ENCODE measurements at regions of chr19 and their contacts with region 1.

Region 1: DNA sequence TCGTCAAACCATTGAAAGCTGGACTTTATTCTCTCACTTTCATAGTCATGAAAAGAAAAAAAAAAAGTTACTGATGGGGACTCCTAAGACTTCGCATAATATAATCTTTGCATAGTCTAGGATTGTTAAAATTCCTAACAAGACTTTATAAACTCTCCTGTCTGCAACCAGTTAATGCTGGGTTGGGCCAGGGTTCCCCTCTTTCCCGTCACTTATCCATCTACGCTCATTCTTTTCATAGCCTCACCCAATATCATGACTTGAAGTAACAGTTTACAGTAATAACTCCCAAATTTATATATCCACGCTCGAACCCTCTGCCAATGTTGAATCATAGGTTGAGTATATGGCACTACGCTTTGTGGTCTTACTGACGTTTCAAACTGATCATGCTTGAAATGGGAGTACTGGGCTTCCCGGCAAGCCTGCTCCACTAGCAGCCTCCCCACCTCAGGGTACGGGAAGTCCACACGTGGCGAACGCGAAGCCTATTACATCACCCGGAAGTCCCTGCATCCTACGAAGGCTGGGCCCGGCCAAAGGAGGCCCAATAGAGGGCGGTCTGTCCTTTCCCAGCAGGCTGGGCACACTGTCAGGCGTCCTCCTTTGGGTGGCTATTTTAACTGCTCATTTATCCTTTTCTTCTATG is 743 bp upstream of the ZNF460 start:
- DNase-seq: peak; percentile 92 to 95 (median 92)
- ATAC-seq: peak; percentile 96 to 98 (median 97)
- H3K4me3 ChIP-seq: peak overlapping the region; percentile 68 to 99 (median 92)
- H3K27ac ChIP-seq: peak overlapping the region; percentile 94 to 100 (median 99)
- H3K4me1 ChIP-seq: peaks cover 8 to 44% (median 29%) of the 10 kb centered on the region in 12 donors
- H3K27me3 ChIP-seq: no peaks in the 10 kb centered on the region
- CTCF ChIP-seq: peak in 10 of 12 donors; percentile 11 to 66 (median 46)
- POLR2A ChIP-seq: peak in 1 of 2 donors; percentile 54

Region 2: DNA sequence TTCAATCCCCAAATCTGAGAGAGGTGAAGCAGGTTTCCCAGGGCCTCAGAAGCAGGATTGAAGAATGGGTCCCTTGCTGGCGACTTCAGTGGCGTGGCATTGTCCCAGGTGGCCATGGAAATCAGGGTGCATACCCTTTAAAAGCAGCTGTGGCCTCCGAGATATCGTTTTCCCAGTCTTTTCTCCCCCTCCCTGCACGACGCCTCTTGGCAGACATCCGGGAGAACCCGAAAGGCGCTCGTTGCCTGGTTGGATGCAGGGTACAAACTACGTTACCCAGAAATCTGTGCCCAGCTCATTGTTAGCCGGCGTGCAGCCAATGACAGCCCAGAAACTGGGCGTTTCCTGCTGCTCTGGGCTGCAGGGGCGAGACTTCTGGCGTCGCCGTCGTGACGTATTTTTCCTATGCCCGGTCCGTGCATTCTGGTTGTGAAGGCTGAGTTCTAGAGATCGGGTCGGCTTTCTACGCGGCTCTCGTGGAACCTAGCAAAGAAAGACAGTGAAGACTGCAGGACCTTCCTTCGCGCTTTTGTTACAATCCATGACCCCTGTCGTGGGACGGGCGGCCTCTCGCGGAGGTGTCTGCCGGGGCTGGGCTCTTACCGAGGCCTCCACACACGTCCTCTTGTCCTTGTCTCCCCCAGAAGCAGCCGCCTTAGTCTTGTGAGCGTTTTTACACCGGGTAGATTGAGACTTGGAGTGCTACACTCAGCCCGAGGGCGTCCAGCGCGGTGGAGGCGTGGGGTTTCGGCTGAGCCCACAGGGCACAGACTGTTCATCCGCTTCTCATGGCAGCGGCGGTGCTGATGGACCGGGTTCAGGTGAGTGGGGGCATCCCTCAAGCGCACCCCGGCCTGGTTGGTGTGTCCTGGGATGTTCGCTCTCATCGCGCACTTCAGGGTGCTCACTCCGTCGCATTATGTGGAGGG is 71.6 kb after region 1 on chr19 and contains the start of gene ZNF304:
- intact Hi-C with region 1: loop called in 5 of 10 experiments (anchors 1 to 10 kb)
- DNase-seq: peak; percentile 95 to 97 (median 96)
- ATAC-seq: peak; percentile 97 to 99 (median 98)
- H3K4me3 ChIP-seq: peak within 1 kb of the TSS; percentile 75 to 100 (median 92)
- H3K27ac ChIP-seq: peak within 1 kb of the TSS; percentile 41 to 91 (median 86)
- H3K4me1 ChIP-seq: peaks cover 0 to 44% (median 21%) of the 10 kb centered on the region in 12 donors
- H3K27me3 ChIP-seq: no peaks in the 10 kb centered on the region
- CTCF ChIP-seq: no peak
- POLR2A ChIP-seq: peak in 1 of 2 donors; percentile 43
- total RNA-seq, gene ZNF304: 7.0 to 14.5 (median 9.7) TPM

Region 3: DNA sequence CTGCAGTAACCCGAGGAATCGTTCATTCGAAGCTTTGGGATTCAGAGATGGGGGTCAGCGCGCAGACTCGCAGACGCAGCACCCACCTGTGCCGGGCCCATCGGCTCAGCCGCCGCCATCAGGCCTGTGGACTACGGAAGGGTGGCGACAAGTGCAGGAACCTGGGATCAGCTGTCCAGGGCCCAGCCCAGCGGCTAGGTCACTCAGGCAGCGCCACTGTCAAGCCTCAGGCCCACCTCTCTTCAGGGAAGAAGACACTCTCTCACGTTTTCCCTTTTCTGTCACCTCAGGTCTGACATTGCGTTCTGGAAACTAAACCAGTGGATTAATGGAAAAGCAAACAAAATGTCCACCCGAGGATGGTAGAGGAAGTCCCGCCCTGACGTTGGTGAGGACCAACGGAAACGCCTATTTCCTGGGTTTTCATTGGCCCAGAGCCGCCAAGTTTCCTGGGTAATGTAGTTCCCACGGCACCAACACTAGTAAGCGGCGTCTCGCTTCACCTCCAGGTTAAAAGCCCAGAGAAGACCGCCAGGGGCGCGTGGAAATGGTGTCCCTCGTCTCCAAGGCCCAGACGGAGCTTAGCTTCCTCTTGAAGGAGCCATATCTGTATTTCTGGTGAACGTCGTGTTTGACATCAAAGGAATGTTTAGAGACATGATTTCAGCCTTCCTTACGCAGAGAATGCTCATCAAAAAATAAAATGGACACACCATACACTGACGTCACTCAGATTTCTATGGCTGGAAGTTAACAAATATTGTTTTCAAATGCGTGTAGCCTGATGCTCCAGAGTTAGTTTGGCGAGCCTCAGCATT is 197.9 kb after region 1 on chr19 and contains the start of gene ZNF772:
- intact Hi-C with region 1: no loop called
- DNase-seq: peak; percentile 89 to 96 (median 96)
- ATAC-seq: peak; percentile 99 to 100 (median 100)
- H3K4me3 ChIP-seq: peak within 1 kb of the TSS; percentile 45 to 93 (median 70)
- H3K27ac ChIP-seq: peak within 1 kb of the TSS; percentile 73 to 94 (median 85)
- H3K4me1 ChIP-seq: peaks cover 0 to 15% (median 5%) of the 10 kb centered on the region in 12 donors
- H3K27me3 ChIP-seq: no peaks in the 10 kb centered on the region
- CTCF ChIP-seq: peak; percentile 5 to 93 (median 68)
- POLR2A ChIP-seq: no peak
- total RNA-seq, gene ZNF772: 15.7 to 30.1 (median 24.1) TPM